Panc1 (cell line): ENCODE measurements at regions of chr19 and their contacts with region 1.

Region 1: GRCh38 chr19:46542428-46543230 is 47.0 kb upstream of the PNMA8B start:
- DNase-seq: peak; percentile 51
- ATAC-seq: peak; percentile 90
- H3K4me3 ChIP-seq: no peak overlapping the region
- H3K27ac ChIP-seq: no peak overlapping the region
- H3K4me1 ChIP-seq: no peaks in the 10 kb centered on the region
- H3K27me3 ChIP-seq: no peaks in the 10 kb centered on the region
- CTCF ChIP-seq: peak; percentile 83

Region 2: GRCh38 chr19:46392243-46392801 is 150.3 kb before region 1 on chr19:
- CTCF ChIA-PET with region 1: no interaction called
- POLR2A ChIA-PET with region 1: no interaction called
- in situ Hi-C with region 1: no loop called
- intact Hi-C with region 1: no loop called
- DNase-seq: no peak
- ATAC-seq: no peak
- H3K4me3 ChIP-seq: no peak overlapping the region
- H3K27ac ChIP-seq: no peak overlapping the region
- H3K4me1 ChIP-seq: no peaks in the 10 kb centered on the region
- H3K27me3 ChIP-seq: no peaks in the 10 kb centered on the region
- CTCF ChIP-seq: no peak

Region 3: GRCh38 chr19:46404055-46404752 is 138.4 kb before region 1 on chr19:
- CTCF ChIA-PET with region 1: interaction called, 5 read pairs
- POLR2A ChIA-PET with region 1: interaction called, 13 read pairs
- in situ Hi-C with region 1: no loop called
- intact Hi-C with region 1: no loop called
- DNase-seq: no peak
- ATAC-seq: peak; percentile 78
- H3K4me3 ChIP-seq: peak overlapping the region; percentile 33 to 58
- H3K27ac ChIP-seq: peak overlapping the region; percentile 61
- H3K4me1 ChIP-seq: peaks cover 3% of the 10 kb centered on the region; the same call in 1 of the 2 replicates
- H3K27me3 ChIP-seq: no peaks in the 10 kb centered on the region
- CTCF ChIP-seq: no peak

Region 4: GRCh38 chr19:46503848-46504453 is 38.7 kb before region 1 on chr19:
- CTCF ChIA-PET with region 1: interaction called, 19 read pairs
- POLR2A ChIA-PET with region 1: no interaction called
- in situ Hi-C with region 1: no loop called
- intact Hi-C with region 1: no loop called
- DNase-seq: no peak
- ATAC-seq: no peak
- H3K4me3 ChIP-seq: no peak overlapping the region
- H3K27ac ChIP-seq: no peak overlapping the region
- H3K4me1 ChIP-seq: no peaks in the 10 kb centered on the region
- H3K27me3 ChIP-seq: no peaks in the 10 kb centered on the region
- CTCF ChIP-seq: no peak

Region 5: DNA sequence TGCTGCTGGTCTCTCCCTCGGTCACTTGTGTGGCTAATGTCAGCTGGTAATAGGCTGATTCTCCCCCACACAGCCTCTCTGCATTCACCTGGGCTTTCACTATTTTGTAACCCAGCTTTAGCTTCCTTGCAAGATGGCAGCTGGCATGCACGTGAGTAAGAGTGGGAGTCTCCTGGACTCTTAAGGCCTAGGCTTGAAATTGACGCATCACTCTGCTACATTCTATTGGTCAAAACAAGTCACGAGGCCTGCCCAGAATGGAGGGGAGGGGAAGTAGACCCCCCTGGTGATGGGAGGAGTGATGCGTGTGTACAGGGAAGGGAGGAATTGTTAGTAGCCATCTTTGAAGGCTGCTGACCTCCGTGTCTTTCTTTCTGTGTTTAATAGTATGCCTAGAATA is 22.0 kb before region 1 on chr19:
- CTCF ChIA-PET with region 1: interaction called, 10 read pairs
- POLR2A ChIA-PET with region 1: no interaction called
- in situ Hi-C with region 1: no loop called
- intact Hi-C with region 1: no loop called
- DNase-seq: no peak
- ATAC-seq: no peak
- H3K4me3 ChIP-seq: no peak overlapping the region
- H3K27ac ChIP-seq: no peak overlapping the region
- H3K4me1 ChIP-seq: no peaks in the 10 kb centered on the region
- H3K27me3 ChIP-seq: no peaks in the 10 kb centered on the region
- CTCF ChIP-seq: no peak

Region 6: DNA sequence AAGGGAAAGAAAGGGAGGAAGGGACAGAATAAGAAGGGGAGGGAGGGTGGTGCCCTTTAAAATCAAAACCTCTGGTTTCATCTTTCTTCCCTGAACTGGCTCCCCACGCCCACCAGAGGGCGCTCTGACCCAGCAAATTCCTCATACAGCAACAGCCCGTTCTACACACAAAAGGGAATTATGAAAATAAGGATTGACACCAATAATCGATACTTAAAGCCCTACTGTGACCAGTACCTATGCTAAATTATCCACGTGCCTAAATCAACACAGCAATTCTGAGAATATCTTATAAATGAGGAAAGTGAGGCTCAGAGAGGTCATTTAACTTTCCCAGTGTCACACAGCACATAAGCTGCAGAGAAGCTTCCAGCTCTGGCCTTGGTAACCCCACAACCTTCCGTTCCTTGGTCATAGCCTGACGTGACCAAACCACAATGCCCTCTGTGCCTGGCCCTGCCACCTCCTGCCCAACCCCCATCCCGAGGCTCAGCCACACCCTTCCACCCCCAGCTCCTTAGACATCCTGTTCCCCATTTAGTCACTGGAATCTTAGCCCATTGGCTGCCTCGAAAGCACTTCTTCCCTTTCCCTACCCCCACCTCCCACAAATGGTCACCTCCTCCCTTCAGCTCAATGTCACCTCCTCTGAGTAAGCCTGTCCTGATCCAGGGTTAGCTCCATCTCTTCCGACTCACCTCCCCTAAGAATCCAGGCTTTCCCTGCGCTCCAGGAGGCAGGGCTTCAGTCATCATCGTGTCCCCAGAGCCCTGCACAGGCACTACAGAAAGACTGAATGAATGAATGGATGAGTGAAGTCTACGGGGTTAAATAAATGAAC is 12.8 kb before region 1 on chr19:
- CTCF ChIA-PET with region 1: interaction called, 11 read pairs
- POLR2A ChIA-PET with region 1: no interaction called
- in situ Hi-C with region 1: no loop called
- intact Hi-C with region 1: no loop called
- DNase-seq: no peak
- ATAC-seq: peak; percentile 72
- H3K4me3 ChIP-seq: no peak overlapping the region
- H3K27ac ChIP-seq: no peak overlapping the region
- H3K4me1 ChIP-seq: peaks cover 3% of the 10 kb centered on the region; the same call in 1 of the 2 replicates
- H3K27me3 ChIP-seq: no peaks in the 10 kb centered on the region
- CTCF ChIP-seq: peak; percentile 85